ENCODE measurements at regions of chr4 and their contacts with region 1.

Region 1: DNA sequence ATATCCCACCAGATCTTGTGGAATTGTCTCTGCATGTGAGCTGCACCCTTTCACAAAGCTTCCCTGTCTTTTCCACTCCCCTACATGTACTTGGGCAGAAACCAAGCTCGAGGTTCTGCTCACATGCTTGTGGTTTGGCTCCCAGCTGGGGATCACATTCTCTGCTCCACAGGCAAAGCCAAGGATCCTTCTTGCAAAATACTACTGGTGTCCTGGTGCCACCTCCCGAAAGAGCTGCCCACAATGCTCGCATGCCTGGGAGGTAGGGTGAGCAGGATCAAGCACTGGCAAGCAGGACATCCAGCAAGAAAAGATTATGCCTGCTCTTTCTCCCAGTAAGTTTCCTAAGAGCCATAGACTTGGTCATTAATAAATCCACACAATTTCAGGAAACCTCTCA is 45.1 kb upstream of the PPARGC1A start:
- DNase-seq: peak; percentile 88
- H3K4me3 ChIP-seq: no peak overlapping the region
- H3K27ac ChIP-seq: peak overlapping the region; percentile 21 to 58 (median 56)
- H3K4me1 ChIP-seq: peaks cover 0 to 27% (median 13%) of the 10 kb centered on the region in 4 donors
- H3K27me3 ChIP-seq: no peaks in the 10 kb centered on the region
- CTCF ChIP-seq: no peak
- EP300 ChIP-seq: peak in 3 of 4 donors; percentile 48 to 74 (median 54)
- POLR2A ChIP-seq: no peak

Region 2: GRCh38 chr4:23889814-23890341 is 45.0 kb before region 1 on chr4 and contains the start of gene PPARGC1A:
- intact Hi-C with region 1: loop called (anchors 5 kb)
- DNase-seq: peak; percentile 88
- H3K4me3 ChIP-seq: peak within 1 kb of the TSS; percentile 36 to 57 (median 52)
- H3K27ac ChIP-seq: peak within 1 kb of the TSS; percentile 78 to 90 (median 86)
- H3K4me1 ChIP-seq: peaks cover 0 to 40% (median 15%) of the 10 kb centered on the region in 4 donors
- H3K27me3 ChIP-seq: no peaks in the 10 kb centered on the region
- CTCF ChIP-seq: no peak
- EP300 ChIP-seq: no peak
- POLR2A ChIP-seq: peak in 1 of 2 donors; percentile 82
- total RNA-seq, gene PPARGC1A: 2.0 to 4.7 (median 3.8) TPM